ENCODE measurements at regions of chr12 and their contacts with region 1.

Region 1: GRCh38 chr12:57782608-57783465 is at the start of gene TSFM:
- DNase-seq: peak; percentile 68
- ATAC-seq: peak; percentile 96
- H3K4me3 ChIP-seq: peak within 1 kb of the TSS; percentile 98
- H3K27ac ChIP-seq: peak within 1 kb of the TSS; percentile 61
- H3K4me1 ChIP-seq: peaks cover 8% of the 10 kb centered on the region; the same call in 1 of the 2 replicates
- H3K27me3 ChIP-seq: no peaks in the 10 kb centered on the region
- CTCF ChIP-seq: peak; percentile 87 to 96 (median 96)
- EP300 ChIP-seq: no peak
- POLR2A ChIP-seq: peak; percentile 96
- RAD21 ChIP-seq: peak; percentile 27; the same call in 1 of the 2 replicates
- polyA plus RNA-seq, gene TSFM: 113 to 132 TPM

Region 2: GRCh38 chr12:57759360-57759980 is 23.4 kb before region 1 on chr12:
- CTCF ChIA-PET with region 1: interaction called, 16 read pairs
- POLR2A ChIA-PET with region 1: interaction called, 3 read pairs
- RAD21 ChIA-PET with region 1: interaction called, 3 read pairs
- SMC1A ChIA-PET with region 1: interaction called, 6 read pairs
- in situ Hi-C with region 1: no loop called
- intact Hi-C with region 1: no loop called
- DNase-seq: no peak
- ATAC-seq: peak; percentile 43
- H3K4me3 ChIP-seq: no peak overlapping the region
- H3K27ac ChIP-seq: no peak overlapping the region
- H3K4me1 ChIP-seq: peaks cover 8% of the 10 kb centered on the region
- H3K27me3 ChIP-seq: peaks cover 0 to 2% of the 10 kb centered on the region in 2 experiments; a peak in 1 of 4 replicates
- CTCF ChIP-seq: peak; percentile 55 to 59 (median 56)
- EP300 ChIP-seq: no peak
- POLR2A ChIP-seq: no peak
- RAD21 ChIP-seq: peak; percentile 40; the same call in 1 of the 2 replicates

Region 3: GRCh38 chr12:57771708-57772428 is 11.0 kb before region 1 on chr12 and contains the start of gene METTL1:
- CTCF ChIA-PET with region 1: interaction called, 8 read pairs
- POLR2A ChIA-PET with region 1: interaction called, 11 read pairs
- RAD21 ChIA-PET with region 1: interaction called, 5 read pairs
- SMC1A ChIA-PET with region 1: interaction called, 3 read pairs
- in situ Hi-C with region 1: no loop called
- intact Hi-C with region 1: no loop called
- DNase-seq: peak; percentile 83
- ATAC-seq: peak; percentile 94
- H3K4me3 ChIP-seq: peak within 1 kb of the TSS; percentile 90
- H3K27ac ChIP-seq: peak within 1 kb of the TSS; percentile 82
- H3K4me1 ChIP-seq: peaks cover 3% of the 10 kb centered on the region
- H3K27me3 ChIP-seq: no peaks in the 10 kb centered on the region; a peak in 1 of 4 replicates
- CTCF ChIP-seq: no peak
- EP300 ChIP-seq: no peak
- POLR2A ChIP-seq: peak; percentile 97
- RAD21 ChIP-seq: no peak
- polyA plus RNA-seq, gene METTL1: 38.5 to 41.9 TPM

Region 4: GRCh38 chr12:57803319-57803893 is 20.6 kb after region 1 on chr12:
- CTCF ChIA-PET with region 1: interaction called, 11 read pairs
- POLR2A ChIA-PET with region 1: no interaction called
- RAD21 ChIA-PET with region 1: no interaction called
- SMC1A ChIA-PET with region 1: interaction called, 5 read pairs
- in situ Hi-C with region 1: no loop called
- intact Hi-C with region 1: no loop called
- DNase-seq: no peak
- ATAC-seq: peak; percentile 74
- H3K4me3 ChIP-seq: no peak overlapping the region
- H3K27ac ChIP-seq: no peak overlapping the region
- H3K4me1 ChIP-seq: no peaks in the 10 kb centered on the region
- H3K27me3 ChIP-seq: no peaks in the 10 kb centered on the region
- CTCF ChIP-seq: peak; percentile 65 to 82 (median 74)
- EP300 ChIP-seq: no peak
- POLR2A ChIP-seq: no peak
- RAD21 ChIP-seq: peak; percentile 61

Region 5: DNA sequence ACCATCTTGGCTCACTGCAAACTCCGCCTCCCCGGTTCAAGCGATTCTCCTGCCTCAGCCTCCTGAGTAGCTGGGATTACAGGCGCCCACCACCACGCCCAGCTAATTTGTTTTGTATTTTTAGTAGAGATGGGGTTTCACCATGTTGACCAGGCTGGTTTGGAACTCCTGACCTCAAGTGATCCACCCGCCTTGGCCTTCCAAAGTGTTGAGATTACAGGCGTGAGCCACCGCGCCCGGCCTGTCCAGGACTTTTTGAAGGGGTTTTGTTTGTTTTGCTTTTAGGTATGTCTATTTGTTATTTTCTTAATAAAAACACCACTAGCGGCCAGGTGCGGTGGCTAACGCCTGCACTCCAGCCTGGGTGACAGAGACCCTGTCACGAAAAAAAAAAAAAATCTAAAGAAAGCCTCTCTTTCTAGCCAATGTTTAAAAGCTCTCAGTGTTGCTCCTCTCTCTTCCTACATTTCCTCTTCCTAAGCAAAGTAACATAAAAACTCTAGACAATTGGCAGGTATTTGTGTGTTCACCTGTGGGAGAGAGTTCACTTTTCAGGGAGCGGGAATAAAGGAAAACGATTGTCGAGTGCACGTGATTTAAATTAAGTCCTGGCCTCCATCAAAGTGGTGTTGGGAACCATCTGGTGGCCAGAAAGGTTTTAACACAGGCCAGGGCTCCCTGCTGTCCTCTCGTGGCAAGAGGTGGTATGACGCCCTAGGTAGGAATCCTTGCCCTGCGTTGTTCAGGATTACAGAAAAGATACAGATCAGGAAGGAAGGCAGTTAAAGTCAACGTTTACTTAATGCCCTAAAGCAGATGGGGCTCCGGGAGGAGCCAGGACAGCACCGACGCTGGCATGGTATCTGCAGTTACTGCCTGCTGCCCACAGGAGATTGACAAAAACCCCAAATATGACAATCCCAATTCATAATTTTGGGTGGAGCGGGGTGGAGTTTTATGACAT is 122.3 kb after region 1 on chr12:
- CTCF ChIA-PET with region 1: interaction called, 12 read pairs
- POLR2A ChIA-PET with region 1: no interaction called
- RAD21 ChIA-PET with region 1: interaction called, 4 read pairs
- SMC1A ChIA-PET with region 1: interaction called, 5 read pairs
- in situ Hi-C with region 1: no loop called
- intact Hi-C with region 1: loop called (anchors 1 kb)
- DNase-seq: peak; percentile 46
- ATAC-seq: peak; percentile 97
- H3K4me3 ChIP-seq: no peak overlapping the region
- H3K27ac ChIP-seq: no peak overlapping the region
- H3K4me1 ChIP-seq: peaks cover 4% of the 10 kb centered on the region
- H3K27me3 ChIP-seq: peaks cover 0 to 2% of the 10 kb centered on the region in 2 experiments; a peak in 2 of 4 replicates
- CTCF ChIP-seq: peak; percentile 100; a peak in 5 of 6 replicates
- EP300 ChIP-seq: no peak
- POLR2A ChIP-seq: no peak
- RAD21 ChIP-seq: peak; percentile 99